Panc1 (cell line): ENCODE measurements at regions of chr5 and their contacts with region 1.

Region 1: GRCh38 chr5:76715736-76716455 is at the start of gene F2R:
- DNase-seq: no peak
- ATAC-seq: peak; percentile 92
- H3K4me3 ChIP-seq: peak within 1 kb of the TSS; percentile 83 to 91
- H3K27ac ChIP-seq: peak within 1 kb of the TSS; percentile 80
- H3K4me1 ChIP-seq: peaks cover 12% of the 10 kb centered on the region; the same call in 1 of the 2 replicates
- H3K27me3 ChIP-seq: peaks cover 2% of the 10 kb centered on the region; the same call in 1 of the 2 replicates
- CTCF ChIP-seq: peak; percentile 87
- total RNA-seq, gene F2R: 26.0 TPM

Region 2: DNA sequence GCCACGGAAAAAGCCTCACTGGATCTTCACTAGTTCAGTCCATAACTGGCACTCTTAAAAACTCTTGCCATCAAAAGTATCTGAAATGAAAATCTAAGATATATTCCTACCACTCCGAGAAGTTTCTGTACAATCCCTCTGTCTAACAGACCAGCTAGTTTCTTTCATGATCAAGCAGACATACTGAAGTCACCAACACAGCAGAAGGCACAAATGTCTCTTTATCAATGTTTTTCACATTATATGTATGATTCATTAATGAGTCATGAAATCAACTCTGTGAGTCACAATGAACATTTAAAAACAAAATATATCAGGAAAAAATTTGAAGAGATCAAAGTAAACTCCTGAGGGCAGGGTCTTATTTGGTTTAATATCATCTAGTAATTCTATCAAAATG is 50.9 kb after region 1 on chr5:
- CTCF ChIA-PET with region 1: no interaction called
- POLR2A ChIA-PET with region 1: no interaction called
- in situ Hi-C with region 1: no loop called
- intact Hi-C with region 1: loop called (anchors 5 kb)
- DNase-seq: no peak
- ATAC-seq: no peak
- H3K4me3 ChIP-seq: no peak overlapping the region
- H3K27ac ChIP-seq: no peak overlapping the region
- H3K4me1 ChIP-seq: no peaks in the 10 kb centered on the region; the same call in 1 of the 2 replicates
- H3K27me3 ChIP-seq: no peaks in the 10 kb centered on the region
- CTCF ChIP-seq: no peak